ENCODE measurements at regions of chr10 and their contacts with region 1.

Region 1: DNA sequence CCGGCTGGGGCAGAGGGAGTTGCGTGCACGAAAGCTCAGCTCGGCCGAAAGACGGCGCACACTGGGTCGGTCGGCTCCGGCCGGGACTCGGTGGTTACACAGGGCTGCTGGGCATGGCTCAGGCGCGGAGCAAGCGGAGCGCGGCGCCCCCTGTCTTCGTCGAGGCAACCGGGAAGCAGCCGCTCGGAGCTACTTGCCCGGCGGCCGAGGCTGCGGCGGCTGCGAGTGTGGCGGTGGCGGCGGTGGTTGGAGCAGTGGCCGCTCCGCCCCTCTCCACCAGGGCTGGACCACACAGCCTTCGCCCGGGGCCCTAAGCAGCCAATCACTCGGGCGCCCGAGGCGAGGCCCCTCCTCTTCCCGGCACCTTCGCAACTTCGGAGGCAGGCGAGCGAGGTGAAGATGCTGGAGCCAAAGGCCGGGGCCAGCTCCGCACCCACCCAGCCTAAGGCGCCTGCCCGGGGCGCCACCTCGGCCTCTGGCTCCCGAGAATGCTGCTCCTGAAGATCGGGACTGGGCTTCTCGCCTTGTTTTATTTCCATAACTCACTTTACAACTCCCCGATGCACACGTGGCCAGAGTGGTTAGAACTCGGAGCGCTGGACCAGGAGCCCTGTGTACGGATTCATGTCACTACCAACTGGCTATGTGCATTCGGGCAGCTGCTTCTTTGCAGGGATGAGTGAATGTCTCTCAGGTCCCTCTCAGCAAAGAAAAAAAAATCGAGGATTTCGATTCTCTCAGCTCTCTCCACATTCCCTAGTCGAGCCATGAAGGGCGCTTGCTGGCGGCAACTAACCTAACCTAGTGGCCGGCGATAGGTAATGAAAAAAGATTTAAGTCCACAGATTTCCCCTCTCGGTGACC is at the start of gene TLL2:
- DNase-seq: peak; percentile 85 to 94 (median 90)
- ATAC-seq: peak; percentile 93 to 97 (median 94)
- H3K4me3 ChIP-seq: peak within 1 kb of the TSS; percentile 26 to 70 (median 40)
- H3K27ac ChIP-seq: peak within 1 kb of the TSS in 2 of 4 donors; percentile 8 to 12
- H3K4me1 ChIP-seq: peaks cover 0 to 8% (median 7%) of the 10 kb centered on the region in 3 donors
- H3K27me3 ChIP-seq: no peaks in the 10 kb centered on the region
- CTCF ChIP-seq: peak; percentile 55 to 61 (median 58)
- total RNA-seq, gene TLL2: 0.14 to 0.97 (median 0.27) TPM

Region 2: GRCh38 chr10:96390460-96390864 is 123.5 kb before region 1 on chr10:
- intact Hi-C with region 1: loop called in 2 of 3 experiments (anchors 5 to 10 kb)
- DNase-seq: peak; percentile 84 to 97 (median 96)
- ATAC-seq: peak; percentile 94 to 98 (median 96)
- H3K4me3 ChIP-seq: no peak overlapping the region
- H3K27ac ChIP-seq: peak overlapping the region in 2 of 4 donors; percentile 43 to 57
- H3K4me1 ChIP-seq: peaks cover 11 to 24% (median 19%) of the 10 kb centered on the region in 3 donors
- H3K27me3 ChIP-seq: no peaks in the 10 kb centered on the region
- CTCF ChIP-seq: no peak

Region 3: DNA sequence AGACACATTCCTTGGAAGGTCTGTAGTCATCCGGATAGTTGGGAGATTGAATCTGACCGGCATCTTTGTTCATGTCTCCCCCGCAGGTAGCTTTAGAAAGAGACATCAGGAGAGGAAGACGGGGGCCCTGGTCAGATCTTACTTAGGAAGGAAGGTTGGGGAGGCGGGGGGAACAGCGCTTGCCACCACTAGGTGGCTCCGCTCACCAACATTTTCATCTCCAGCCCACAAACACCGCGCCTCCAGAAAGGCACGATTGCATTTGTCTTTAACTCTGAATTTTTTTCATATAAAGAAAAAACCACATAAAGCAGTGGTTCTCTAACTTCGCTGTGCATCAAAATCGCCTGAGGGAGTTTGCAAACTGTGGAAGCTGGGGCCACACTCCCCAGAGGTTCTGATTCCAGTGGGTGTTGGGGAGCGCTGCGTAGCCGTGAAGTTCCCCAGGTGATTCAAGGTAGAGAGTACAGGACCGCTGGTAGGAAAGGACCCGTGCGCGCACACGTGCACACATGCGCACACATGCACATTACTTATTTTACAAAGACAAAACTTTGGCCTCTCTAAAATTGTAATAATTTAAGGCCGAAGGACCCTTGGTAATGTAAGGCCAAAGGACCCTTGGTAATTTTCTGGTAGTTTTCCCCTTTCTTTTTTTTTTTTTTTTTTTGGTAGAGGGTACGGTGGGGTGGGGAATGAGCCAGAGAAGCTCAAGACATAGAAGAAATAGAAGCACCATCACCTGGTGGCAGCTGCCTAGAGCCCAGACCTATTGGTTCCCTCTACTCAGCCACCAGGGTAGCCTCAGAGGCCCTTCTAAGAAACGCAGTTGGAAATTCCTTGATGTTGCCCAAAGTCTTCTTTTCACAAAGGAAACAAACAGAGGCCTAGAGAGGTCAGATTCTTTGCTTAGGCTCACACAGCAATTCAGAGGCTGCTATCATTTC is 117.7 kb before region 1 on chr10:
- intact Hi-C with region 1: loop called in 2 of 3 experiments (anchors 5 to 10 kb)
- DNase-seq: peak in 5 of 6 donors; percentile 58 to 75 (median 62)
- ATAC-seq: peak; percentile 88 to 97 (median 96)
- H3K4me3 ChIP-seq: peak overlapping the region in 2 of 4 donors; percentile 23 to 29
- H3K27ac ChIP-seq: no peak overlapping the region
- H3K4me1 ChIP-seq: peaks cover 0 to 1% (median under 1%) of the 10 kb centered on the region in 3 donors
- H3K27me3 ChIP-seq: no peaks in the 10 kb centered on the region
- CTCF ChIP-seq: peak; percentile 73 to 88 (median 79)

Region 4: DNA sequence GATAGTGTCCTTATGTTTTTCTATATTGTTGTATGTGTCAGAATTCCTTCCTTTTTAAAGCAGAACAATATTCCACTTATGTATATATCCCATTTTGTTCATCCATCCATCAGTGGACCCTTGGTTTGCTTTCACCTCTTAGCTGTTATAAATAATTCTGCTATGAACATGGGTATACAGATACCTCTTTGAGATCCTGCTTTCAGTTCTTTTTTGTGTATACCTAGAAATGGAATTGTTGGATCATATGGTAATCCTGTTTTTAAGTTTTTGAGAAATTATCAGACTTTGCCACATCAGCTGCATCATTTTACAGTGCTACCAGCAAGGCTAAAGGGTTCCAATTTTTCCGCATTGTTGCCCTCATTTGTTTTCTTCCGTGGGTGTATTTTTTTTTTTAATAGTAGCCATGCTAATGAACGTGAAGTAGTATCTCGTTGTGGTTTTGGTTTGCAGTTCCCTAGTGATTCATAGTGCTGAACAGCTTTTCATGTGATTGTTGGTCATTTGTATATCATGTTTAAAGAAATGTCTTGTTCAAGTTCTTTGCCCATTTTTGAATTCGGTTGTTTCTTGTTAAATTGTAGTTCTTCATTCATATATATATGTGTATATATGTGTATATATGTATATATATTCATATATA is 406.0 kb after region 1 on chr10:
- intact Hi-C with region 1: no loop called
- DNase-seq: no peak
- ATAC-seq: no peak
- H3K4me3 ChIP-seq: no peak overlapping the region
- H3K27ac ChIP-seq: no peak overlapping the region
- H3K4me1 ChIP-seq: peaks cover 7 to 11% (median 10%) of the 10 kb centered on the region in 3 donors
- H3K27me3 ChIP-seq: no peaks in the 10 kb centered on the region
- CTCF ChIP-seq: no peak